ENCODE measurements at regions of chr2 and their contacts with region 1.

Region 1: DNA sequence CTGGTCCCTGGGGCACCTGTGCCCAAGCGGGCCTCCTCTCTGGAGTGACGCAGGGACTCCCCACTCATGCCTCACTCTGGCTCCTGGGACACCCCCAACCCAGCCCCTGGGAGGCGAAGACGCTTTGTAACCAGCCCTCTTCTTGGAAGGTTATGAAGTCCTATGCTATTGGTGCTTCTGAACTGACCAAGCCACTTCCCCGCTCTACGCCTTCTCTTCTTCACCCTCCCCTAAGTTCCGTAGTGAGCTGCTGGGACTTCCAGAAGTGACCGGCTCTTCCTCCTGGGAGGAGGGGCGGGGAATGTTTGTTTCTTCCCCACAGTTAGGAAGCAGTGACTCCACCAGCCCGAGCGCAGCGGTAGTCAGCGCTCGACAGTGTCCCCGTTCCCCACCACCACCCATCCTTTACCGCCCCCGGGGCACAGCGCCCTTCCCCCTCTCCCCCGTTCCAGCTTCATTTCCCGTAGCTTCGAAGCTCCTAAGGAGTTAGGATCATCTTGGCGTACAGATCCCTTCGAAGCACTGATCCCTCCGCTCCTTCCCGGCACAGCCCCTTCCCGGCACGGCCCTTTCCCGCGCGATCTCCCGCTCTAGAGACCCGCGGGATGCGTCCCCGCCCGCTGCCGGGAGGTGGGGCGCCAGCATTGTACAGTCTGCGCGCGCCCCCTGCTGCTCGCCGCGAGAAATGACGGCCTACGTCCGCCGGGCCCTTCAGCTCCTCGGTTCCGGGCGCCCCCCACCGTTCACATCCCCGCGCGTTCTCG is 25.3 kb upstream of the NOTO start:
- DNase-seq: peak; percentile 69 to 77
- ATAC-seq: peak; percentile 90 to 93
- H3K4me3 ChIP-seq: peak overlapping the region; percentile 52 to 87 (median 65)
- H3K27ac ChIP-seq: peak overlapping the region; percentile 62 to 81 (median 74)
- H3K4me1 ChIP-seq: peaks cover 0 to 18% of the 10 kb centered on the region in 2 donors
- H3K27me3 ChIP-seq: peaks cover 18 to 29% (median 26%) of the 10 kb centered on the region in 3 donors
- CTCF ChIP-seq: peak; percentile 93 to 99 (median 96)
- POLR2A ChIP-seq: peak; percentile 15 to 25

Region 2: DNA sequence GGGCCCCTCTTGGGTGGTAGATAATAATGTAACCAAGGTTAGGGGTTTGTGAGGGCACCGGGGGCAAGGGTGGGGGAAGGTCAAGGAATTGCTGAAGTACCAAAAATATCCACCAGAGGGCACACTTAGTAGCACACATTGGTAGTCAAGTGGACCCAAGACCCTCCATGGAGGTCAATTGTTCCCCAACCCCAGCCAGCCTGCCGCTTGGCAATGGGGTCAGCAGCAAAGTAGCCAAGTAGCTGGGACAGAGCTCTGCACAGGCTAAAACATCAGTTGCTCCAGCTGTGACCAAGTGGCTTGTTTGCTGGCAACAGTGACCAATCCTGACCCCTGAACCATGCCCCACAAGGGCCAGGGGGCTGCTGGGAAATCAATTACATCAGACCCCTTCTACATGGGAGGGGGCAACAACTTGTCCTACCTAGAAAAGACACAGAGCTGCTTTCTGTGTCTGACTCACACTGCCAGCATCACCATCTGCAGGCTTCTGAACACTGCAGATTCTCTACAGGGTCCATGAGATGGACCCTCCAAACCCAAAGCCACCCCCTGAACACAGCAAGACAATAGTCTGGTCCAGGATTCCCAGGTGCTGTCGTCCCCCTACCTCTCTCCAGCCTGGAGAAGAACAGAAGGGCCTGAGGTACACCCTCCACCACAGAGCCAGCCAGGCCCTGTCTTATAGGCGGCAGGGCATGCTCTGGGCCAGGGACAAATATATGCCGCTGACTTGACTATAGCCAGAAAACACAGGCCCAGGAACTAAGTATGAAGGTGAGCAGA is 183.7 kb before region 1 on chr2:
- in situ Hi-C with region 1: loop called in 1 of 4 experiments (anchors 25 kb)
- intact Hi-C with region 1: loop called (anchors 2 kb)
- DNase-seq: no peak
- ATAC-seq: no peak
- H3K4me3 ChIP-seq: no peak overlapping the region
- H3K27ac ChIP-seq: no peak overlapping the region
- H3K4me1 ChIP-seq: no peaks in the 10 kb centered on the region
- H3K27me3 ChIP-seq: no peaks in the 10 kb centered on the region
- CTCF ChIP-seq: peak; percentile 54 to 82 (median 78)
- POLR2A ChIP-seq: no peak

Region 3: GRCh38 chr2:73071360-73072133 is 105.5 kb before region 1 on chr2 and contains the start of gene SFXN5:
- in situ Hi-C with region 1: no loop called
- intact Hi-C with region 1: loop called (anchors 5 kb)
- DNase-seq: peak; percentile 98
- ATAC-seq: peak; percentile 84 to 90
- H3K4me3 ChIP-seq: peak within 1 kb of the TSS; percentile 83 to 93 (median 92)
- H3K27ac ChIP-seq: peak within 1 kb of the TSS; percentile 87 to 97 (median 92)
- H3K4me1 ChIP-seq: peaks cover 19 to 48% of the 10 kb centered on the region in 2 donors
- H3K27me3 ChIP-seq: no peaks in the 10 kb centered on the region
- CTCF ChIP-seq: peak in 2 of 5 experiments; percentile 32 to 35
- POLR2A ChIP-seq: peak; percentile 24 to 59
- total RNA-seq, gene SFXN5: 6.8 to 22.7 (median 9.1) TPM

Region 4: DNA sequence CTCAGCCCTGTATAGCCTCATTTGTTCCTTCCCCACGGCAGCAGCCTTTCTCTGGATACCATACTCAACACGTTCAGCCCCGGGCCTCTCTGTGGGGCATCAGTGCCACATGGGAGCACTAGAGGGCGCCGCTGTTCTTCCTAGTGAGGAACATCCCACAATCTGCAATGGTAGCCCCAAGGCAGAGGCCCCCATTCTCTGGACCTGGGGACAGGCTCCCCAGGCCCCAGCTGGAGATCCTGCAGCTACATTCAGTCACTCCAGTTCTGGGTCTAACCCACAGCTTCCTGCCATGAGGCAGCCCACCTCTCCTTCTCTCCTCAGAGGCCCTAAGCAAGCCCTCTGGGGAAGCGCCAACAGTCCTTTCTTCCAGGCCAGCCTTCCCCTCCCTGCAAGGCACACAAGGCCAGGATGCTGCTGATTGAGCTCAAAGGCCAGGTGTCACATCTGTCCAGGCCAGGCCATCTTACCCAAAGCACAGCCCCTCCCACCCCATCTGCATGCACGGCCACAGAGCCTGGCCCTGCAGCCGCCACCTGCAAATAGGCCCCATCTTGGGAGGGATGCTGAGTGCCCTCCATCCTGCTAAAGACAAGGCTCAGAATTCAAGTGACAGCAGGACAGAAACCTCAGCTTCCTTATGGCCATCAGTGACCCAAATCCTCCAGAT is 91.2 kb before region 1 on chr2:
- in situ Hi-C with region 1: no loop called
- intact Hi-C with region 1: loop called (anchors 1 kb)
- DNase-seq: peak; percentile 52 to 74
- ATAC-seq: peak; percentile 79 to 82
- H3K4me3 ChIP-seq: no peak overlapping the region
- H3K27ac ChIP-seq: no peak overlapping the region
- H3K4me1 ChIP-seq: no peaks in the 10 kb centered on the region
- H3K27me3 ChIP-seq: no peaks in the 10 kb centered on the region
- CTCF ChIP-seq: peak; percentile 81 to 96 (median 89)
- POLR2A ChIP-seq: no peak

Region 5: GRCh38 chr2:73163483-73164367 is 13.3 kb before region 1 on chr2:
- in situ Hi-C with region 1: no loop called
- intact Hi-C with region 1: loop called (anchors 2 kb)
- DNase-seq: peak; percentile 16 to 32
- ATAC-seq: peak; percentile 63 to 81
- H3K4me3 ChIP-seq: no peak overlapping the region
- H3K27ac ChIP-seq: no peak overlapping the region
- H3K4me1 ChIP-seq: no peaks in the 10 kb centered on the region
- H3K27me3 ChIP-seq: no peaks in the 10 kb centered on the region
- CTCF ChIP-seq: peak; percentile 68 to 88 (median 78)
- POLR2A ChIP-seq: no peak

Region 6: DNA sequence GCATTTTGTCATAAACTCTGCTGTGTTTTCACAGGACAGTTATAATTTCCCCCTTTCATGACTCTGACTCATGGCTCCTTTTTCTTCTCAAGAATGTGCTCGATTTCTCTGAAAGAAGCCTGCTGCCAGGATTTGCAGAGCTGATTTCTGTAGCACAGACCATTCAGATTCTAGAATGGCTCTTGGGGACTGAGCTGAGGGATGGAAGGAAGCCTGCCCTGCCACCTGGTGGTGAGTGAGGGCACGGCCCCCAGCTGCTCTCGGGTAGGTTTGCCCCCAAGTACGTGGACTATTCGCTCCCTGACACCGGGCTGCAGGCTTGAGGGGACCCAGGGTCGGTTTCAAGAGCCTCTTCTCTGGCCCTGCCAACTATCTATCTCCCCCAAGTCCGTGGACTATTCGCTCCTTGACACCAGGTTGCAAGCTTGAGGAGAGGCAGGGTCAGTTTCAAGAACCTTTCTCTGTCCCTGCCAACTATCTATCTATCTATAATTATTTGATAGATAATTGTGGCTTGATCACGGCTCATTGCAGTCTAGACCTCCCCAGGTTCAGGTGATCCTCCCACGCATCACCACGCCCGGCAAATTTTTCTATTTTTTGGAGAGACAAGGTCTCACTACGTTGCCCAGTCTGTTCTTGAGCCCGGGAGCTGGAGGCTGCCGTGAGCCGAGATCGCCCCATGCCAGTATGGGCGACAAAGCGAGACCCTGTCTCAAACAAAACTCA is 35.5 kb after region 1 on chr2:
- in situ Hi-C with region 1: no loop called
- intact Hi-C with region 1: loop called (anchors 1 kb)
- DNase-seq: peak; percentile 32 to 56
- ATAC-seq: peak; percentile 38 to 48
- H3K4me3 ChIP-seq: no peak overlapping the region
- H3K27ac ChIP-seq: peak overlapping the region in 1 of 4 donors; percentile 58
- H3K4me1 ChIP-seq: peaks cover 9 to 12% of the 10 kb centered on the region in 2 donors
- H3K27me3 ChIP-seq: no peaks in the 10 kb centered on the region
- CTCF ChIP-seq: peak; percentile 57 to 88 (median 78)
- POLR2A ChIP-seq: no peak

Region 7: DNA sequence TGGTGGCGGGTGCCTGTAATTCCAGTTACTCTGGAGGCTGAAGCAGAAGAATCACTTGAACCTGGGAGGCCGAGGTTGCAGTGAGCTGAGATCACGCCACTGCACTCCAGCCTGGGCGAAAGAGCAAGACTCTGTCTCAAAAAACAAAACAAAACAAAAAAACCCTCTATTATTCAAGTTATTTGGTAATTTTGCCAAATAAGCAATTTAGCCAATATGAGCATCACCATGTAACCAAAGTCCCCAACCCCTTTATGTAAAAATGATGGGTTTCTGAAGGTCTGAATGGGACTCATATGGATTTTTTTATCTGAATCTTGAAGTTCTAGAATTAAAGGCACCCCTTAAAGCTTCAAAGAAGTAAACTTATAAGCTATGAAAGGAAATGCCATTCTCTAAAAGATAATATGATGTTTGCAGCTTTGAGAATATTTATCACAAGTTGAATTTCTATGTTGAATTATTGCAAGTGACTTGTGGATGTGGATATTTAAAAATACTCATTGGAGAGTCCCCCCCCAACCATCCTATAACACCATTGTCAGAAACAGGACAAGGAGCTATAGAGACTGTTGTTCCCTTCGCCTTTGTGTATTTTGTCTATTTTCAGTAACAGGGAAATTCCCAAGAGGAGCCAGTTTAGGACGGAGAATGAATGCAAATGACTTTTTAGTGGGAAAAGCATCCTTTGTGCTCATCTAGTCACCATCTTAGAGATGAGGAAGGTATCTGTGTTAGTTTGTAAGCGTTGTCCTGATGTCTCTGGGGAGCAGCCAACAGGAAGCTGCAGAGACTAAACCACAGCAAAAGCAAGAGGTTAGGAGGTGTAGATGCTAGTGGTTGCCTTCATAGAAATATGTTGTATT is 875.9 kb after region 1 on chr2:
- in situ Hi-C with region 1: no loop called
- intact Hi-C with region 1: no loop called
- DNase-seq: no peak
- ATAC-seq: no peak
- H3K4me3 ChIP-seq: no peak overlapping the region
- H3K27ac ChIP-seq: no peak overlapping the region
- H3K4me1 ChIP-seq: no peaks in the 10 kb centered on the region
- H3K27me3 ChIP-seq: no peaks in the 10 kb centered on the region
- CTCF ChIP-seq: no peak
- POLR2A ChIP-seq: no peak